Heart right ventricle (tissue), 16 donors: ENCODE measurements at regions of chr10 and their contacts with region 1.

Region 1: DNA sequence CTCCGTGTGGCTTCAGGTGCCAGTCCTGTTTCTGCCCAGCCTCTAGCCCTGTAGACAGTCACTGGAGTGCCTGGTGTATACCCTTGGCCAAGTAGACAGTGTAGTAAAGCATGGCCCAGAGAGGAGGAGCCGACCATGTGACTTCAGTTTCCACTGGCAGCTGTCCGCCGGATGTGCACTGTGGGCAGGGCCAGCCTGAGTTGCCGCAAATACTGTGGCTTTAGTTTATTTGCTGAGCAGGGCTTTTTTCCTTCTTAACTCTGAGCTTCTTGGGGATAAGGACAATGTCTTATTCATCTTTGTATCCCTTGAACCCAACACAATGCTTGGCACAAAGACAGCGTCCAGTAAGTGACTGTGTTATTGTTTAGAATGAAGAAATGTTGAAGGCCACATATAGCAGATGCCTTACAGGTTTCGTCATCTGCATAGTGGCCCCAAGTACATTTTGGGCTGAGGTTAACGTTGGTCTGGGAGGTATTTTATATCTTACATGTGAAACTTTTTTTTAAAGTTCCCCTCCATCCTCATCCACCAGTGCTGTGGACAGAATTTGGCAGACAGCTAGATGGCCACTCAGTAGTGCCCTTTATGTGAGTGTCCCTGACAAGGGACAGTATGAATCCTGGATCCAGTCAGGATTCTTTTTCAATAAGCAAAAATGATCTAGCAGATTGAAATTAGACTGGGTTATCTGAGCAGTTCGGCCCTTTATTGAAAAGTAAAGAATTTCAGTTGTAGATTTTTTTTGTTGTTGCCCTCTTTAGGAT is 40.6 kb downstream of the CYP17A1 start:
- DNase-seq: peak; percentile 86 to 91
- ATAC-seq: peak; percentile 94 to 97 (median 96)
- H3K4me3 ChIP-seq: peak overlapping the region in 8 of 10 donors; percentile 2 to 35 (median 19)
- H3K27ac ChIP-seq: peak overlapping the region; percentile 63 to 93 (median 84)
- H3K4me1 ChIP-seq: peaks cover 50 to 100% (median 97%) of the 10 kb centered on the region in 9 donors
- H3K27me3 ChIP-seq: no peaks in the 10 kb centered on the region
- CTCF ChIP-seq: no peak

Region 2: DNA sequence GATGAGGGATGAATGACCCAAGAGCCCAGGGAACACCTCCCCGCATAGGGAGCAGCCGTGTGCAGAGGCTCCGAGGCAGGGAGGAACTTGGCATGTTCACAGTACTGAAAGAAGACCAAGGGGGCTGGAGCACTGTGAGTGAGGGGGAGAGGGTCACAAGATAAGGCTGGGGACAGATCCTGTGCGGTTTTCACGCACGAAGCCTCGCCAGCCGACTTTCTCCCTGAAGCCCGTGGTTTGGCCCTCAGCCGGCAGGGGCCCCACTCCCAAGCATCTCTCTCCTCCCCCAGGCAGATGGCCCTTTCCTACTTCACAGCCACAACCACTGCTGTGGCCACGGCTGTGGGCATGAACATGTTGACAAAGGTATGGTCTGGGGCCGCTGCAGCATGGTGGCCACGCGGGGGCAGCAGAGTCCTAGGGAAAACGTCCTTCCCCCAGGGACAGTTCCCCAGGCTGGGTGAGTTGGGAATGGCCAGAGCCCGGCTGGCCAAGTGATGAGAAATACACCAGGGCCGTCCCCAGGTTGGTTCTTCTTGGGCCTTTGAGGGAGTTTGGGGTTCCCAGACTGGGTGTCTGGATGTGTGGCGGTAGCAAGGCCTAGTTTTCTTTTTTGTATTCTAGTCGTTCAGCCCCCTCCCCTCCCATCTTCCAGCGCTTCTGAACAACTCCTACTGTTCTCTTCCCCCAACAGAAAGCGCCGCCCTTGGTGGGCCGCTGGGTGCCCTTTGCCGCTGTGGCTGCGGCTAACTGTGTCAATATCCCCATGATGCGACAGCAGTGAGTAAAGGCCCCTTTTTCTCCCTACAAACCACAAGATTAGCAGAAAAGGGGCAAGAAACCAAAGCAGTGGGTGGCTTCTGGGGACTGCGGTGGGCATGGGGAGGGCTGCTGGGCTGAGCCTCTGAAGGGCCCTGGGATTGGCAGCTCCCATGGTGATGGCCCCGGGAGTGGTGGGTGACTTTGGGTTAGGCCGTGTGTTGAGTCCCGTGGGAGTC is 67.3 kb before region 1 on chr10:
- intact Hi-C with region 1: no loop called
- DNase-seq: peak; percentile 89 to 91
- ATAC-seq: peak; percentile 91 to 97 (median 95)
- H3K4me3 ChIP-seq: no peak overlapping the region
- H3K27ac ChIP-seq: peak overlapping the region in 1 of 10 donors; percentile 6
- H3K4me1 ChIP-seq: peaks cover 0 to 29% (median 6%) of the 10 kb centered on the region in 9 donors
- H3K27me3 ChIP-seq: no peaks in the 10 kb centered on the region
- CTCF ChIP-seq: peak; percentile 82 to 99 (median 96)

Region 3: GRCh38 chr10:102776779-102777456 is 19.7 kb before region 1 on chr10:
- intact Hi-C with region 1: loop called in 2 of 10 experiments (anchors 1 to 2 kb)
- DNase-seq: peak; percentile 64 to 92
- ATAC-seq: peak; percentile 68 to 87 (median 81)
- H3K4me3 ChIP-seq: peak overlapping the region; percentile 36 to 67 (median 59)
- H3K27ac ChIP-seq: peak overlapping the region; percentile 85 to 99 (median 97)
- H3K4me1 ChIP-seq: peaks cover 41 to 100% (median 87%) of the 10 kb centered on the region in 9 donors
- H3K27me3 ChIP-seq: no peaks in the 10 kb centered on the region
- CTCF ChIP-seq: no peak

Region 4: DNA sequence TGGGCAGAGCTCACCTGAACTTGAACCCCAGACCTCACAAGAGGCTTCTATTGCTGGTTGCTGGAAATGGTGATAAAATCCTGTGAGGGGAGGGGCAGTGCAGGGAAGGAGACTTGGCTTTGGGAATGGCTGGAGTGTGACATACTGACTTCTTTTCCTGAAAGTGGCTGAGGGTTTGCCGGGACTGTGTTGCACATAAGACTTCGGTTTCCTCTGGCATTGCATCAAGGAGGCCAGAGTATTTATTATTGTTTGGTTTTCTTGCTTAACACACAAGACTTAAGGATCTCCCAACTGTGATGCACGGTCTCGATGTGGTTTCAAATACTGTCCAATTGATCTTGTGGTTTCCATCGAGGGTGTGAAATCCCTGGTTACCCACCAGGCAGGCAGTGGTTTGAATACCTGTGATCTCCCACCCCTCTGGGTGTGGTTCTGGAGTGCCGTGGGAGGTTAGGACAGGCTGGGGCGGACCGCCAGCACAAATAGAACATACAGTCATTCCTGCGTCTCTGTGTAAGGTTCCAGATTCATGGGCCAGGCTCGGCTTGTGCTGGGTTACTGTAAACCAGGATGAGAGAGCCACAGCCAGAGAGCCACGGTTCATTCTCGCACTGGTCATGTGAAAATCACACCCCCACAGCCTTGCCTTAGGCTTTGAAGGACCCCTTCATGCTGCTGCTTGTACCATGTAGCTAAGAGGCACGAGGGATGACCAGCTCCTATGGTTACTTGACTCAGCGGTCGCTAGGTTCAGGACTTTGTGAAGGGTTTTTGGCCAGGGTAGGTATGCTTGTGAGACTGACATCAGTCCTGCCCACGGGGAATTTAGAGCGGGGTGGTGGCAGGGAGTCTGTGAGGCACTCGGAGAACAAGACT is 13.7 kb before region 1 on chr10:
- intact Hi-C with region 1: loop called in 1 of 10 experiments (anchors 2 kb)
- DNase-seq: peak; percentile 59 to 72
- ATAC-seq: peak; percentile 46 to 88 (median 78)
- H3K4me3 ChIP-seq: peak overlapping the region in 7 of 10 donors; percentile 10 to 27 (median 13)
- H3K27ac ChIP-seq: peak overlapping the region; percentile 74 to 99 (median 96)
- H3K4me1 ChIP-seq: peaks cover 50 to 99% (median 93%) of the 10 kb centered on the region in 9 donors
- H3K27me3 ChIP-seq: no peaks in the 10 kb centered on the region
- CTCF ChIP-seq: no peak